WTC11 (cell line): ENCODE measurements at regions of chr1 and their contacts with region 1.

Region 1: DNA sequence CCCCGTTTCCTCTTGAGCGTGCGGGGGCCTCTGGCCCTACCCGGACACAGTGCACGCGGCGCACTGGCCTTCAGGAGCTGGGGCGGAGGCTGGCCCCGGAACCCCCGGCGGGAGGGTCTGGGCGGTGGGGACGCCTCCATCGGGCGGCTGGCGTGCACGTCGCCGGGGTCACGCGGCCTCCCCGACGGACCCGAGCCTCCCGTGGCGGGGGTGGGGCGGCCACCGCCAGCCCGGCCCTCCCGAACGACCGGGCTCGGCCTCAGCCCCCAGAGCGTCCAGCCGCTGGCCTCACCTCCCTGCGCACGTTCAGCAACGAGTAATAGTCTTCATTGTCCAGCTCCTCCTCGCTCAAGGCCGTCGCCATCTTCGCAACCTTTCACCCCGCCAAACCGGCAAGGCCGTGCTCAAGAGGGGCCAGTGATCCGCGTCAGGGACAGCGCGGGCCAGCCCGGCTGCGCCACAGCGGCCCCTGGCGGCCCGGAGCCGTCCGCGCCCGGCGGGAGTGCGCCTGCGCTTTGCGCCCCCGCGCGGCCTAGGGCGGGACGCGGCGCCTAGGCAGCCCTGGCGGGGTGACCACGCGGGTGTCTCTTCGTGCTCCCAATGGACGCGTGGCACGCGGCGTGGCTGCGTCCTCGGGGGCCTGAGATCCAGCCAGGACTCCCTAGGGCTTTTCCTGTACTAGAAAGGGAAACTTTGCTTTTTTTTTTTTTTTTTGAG is at the start of gene DNAJC11:
- DNase-seq: peak; percentile 85
- ATAC-seq: peak; percentile 94
- H3K4me3 Mint-ChIP-seq: peak within 1 kb of the TSS; percentile 94
- H3K27ac Mint-ChIP-seq: peak within 1 kb of the TSS; percentile 97
- H3K4me1 Mint-ChIP-seq: peaks cover 25% of the 10 kb centered on the region
- H3K27me3 Mint-ChIP-seq: peaks cover 4% of the 10 kb centered on the region; the same call in 1 of the 2 replicates
- CTCF ChIP-seq: peak; percentile 85
- total RNA-seq, gene DNAJC11: 91.3 to 102 TPM (median 93.4 TPM) in 3 replicates

Region 2: DNA sequence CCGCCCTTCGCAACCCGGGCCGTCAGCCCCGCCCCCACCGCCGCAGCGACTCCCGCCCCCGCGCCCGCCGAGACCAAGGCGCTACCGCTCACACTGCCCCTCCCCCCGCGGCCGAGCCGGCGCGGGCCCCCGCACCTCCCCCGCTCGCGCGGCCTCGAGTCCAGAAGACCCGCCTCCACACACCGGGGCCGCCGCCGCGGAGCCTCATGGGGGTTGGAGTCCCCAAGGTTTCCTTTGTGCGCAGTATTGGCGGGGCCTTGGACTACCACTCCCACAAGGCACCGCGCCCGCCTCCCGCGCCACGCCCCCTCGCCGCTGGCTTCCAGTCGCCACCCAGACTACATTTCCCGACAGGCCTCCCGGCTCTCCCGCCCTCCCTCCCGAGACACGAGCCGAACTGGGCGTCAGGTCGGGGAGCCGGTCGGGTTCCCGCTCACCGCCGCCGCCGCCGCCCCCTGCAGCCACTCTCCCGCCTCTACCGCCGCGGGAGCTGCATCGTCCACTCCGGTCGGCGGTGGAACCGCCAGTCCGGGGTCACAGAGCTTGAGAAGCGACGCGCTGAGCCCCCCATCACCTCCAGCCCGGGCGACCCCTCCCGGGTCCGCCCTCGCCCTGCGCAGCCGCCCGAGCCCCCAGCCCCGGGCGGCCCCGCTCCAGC is 88.1 kb before region 1 on chr1 and contains the start of gene PHF13:
- CTCF ChIA-PET with region 1: no interaction called
- POLR2A ChIA-PET with region 1: no interaction called
- DNase-seq: peak; percentile 100
- ATAC-seq: peak; percentile 97
- H3K4me3 Mint-ChIP-seq: peak within 1 kb of the TSS; percentile 82
- H3K27ac Mint-ChIP-seq: peak within 1 kb of the TSS; percentile 83
- H3K4me1 Mint-ChIP-seq: peaks cover 22% of the 10 kb centered on the region
- H3K27me3 Mint-ChIP-seq: peaks cover 13% of the 10 kb centered on the region
- CTCF ChIP-seq: no peak
- total RNA-seq, gene PHF13: 39.6 to 40.0 TPM (median 40.0 TPM) in 3 replicates

Region 3: DNA sequence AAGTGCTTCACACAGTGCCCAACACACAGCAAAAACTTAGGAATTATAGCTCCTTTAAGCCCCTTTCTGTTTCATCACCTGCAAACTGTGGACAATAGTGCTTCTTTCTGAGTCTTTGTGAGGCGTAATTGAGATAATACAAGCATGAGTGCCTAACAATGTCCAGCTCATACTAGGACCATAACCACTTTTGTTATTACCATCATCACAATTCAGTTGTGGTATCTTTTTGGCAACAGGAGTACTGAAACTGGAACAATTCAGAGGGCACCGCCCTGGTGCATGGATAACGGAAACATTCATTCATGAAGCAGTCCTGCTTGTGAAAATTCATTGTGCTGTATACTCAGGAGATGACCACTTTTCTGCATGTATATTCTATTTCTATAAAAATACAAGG is 18.2 kb before region 1 on chr1:
- CTCF ChIA-PET with region 1: interaction called, 10 read pairs
- POLR2A ChIA-PET with region 1: interaction called, 3 read pairs
- DNase-seq: no peak
- ATAC-seq: no peak
- H3K4me3 Mint-ChIP-seq: no peak overlapping the region
- H3K27ac Mint-ChIP-seq: no peak overlapping the region
- H3K4me1 Mint-ChIP-seq: peaks cover 12% of the 10 kb centered on the region
- H3K27me3 Mint-ChIP-seq: no peaks in the 10 kb centered on the region
- CTCF ChIP-seq: no peak

Region 4: GRCh38 chr1:7616076-7616832 is 914.7 kb after region 1 on chr1:
- CTCF ChIA-PET with region 1: no interaction called
- POLR2A ChIA-PET with region 1: no interaction called
- DNase-seq: peak; percentile 79
- ATAC-seq: peak; percentile 81
- H3K4me3 Mint-ChIP-seq: no peak overlapping the region
- H3K27ac Mint-ChIP-seq: no peak overlapping the region
- H3K4me1 Mint-ChIP-seq: peaks cover 13% of the 10 kb centered on the region
- H3K27me3 Mint-ChIP-seq: no peaks in the 10 kb centered on the region
- CTCF ChIP-seq: no peak